Ovary (tissue), 10 donors: ENCODE measurements at regions of chr3 and their contacts with region 1.

Region 1: GRCh38 chr3:154510780-154511179 is 80.8 kb upstream of the GPR149 start:
- DNase-seq: no peak
- H3K4me3 ChIP-seq: no peak overlapping the region
- H3K27ac ChIP-seq: no peak overlapping the region
- H3K4me1 ChIP-seq: no peaks in the 10 kb centered on the region
- H3K27me3 ChIP-seq: no peaks in the 10 kb centered on the region
- CTCF ChIP-seq: no peak
- EP300 ChIP-seq: no peak
- POLR2A ChIP-seq: no peak

Region 2: GRCh38 chr3:152794736-152795135 is 1716.0 kb before region 1 on chr3:
- intact Hi-C with region 1: loop called in 1 of 4 experiments (anchors 10 kb)
- DNase-seq: no peak
- H3K4me3 ChIP-seq: no peak overlapping the region
- H3K27ac ChIP-seq: no peak overlapping the region
- H3K4me1 ChIP-seq: no peaks in the 10 kb centered on the region
- H3K27me3 ChIP-seq: no peaks in the 10 kb centered on the region
- CTCF ChIP-seq: no peak
- EP300 ChIP-seq: no peak
- POLR2A ChIP-seq: no peak

Region 3: GRCh38 chr3:154598166-154598565 is 87.4 kb after region 1 on chr3:
- intact Hi-C with region 1: no loop called
- DNase-seq: no peak
- H3K4me3 ChIP-seq: no peak overlapping the region
- H3K27ac ChIP-seq: no peak overlapping the region
- H3K4me1 ChIP-seq: no peaks in the 10 kb centered on the region
- H3K27me3 ChIP-seq: no peaks in the 10 kb centered on the region
- CTCF ChIP-seq: no peak
- EP300 ChIP-seq: no peak
- POLR2A ChIP-seq: no peak